OCI-LY7 (cell line): ENCODE measurements at regions of chr6 and their contacts with region 1.

Region 1: DNA sequence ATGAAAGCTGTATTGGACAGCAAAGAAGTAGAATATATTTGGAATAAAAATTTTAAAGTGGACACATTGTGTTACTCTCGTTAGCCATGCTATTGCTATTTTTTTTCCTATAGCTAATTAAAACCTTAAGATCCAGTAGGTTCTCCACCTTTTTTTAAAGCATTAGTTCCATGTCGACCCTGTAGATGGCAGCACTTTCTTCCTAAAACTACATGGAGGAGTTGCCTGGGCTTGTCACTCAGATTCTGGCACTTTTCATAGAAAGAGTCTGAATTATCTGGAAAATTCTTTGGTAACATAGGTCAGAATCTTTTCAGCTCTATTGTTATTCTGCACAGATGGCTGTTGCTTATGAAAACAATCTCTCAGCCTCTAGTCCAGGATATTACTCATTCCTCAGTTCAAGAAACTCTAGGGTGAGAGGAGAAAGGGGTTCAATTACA is 42.0 kb upstream of the ESR1 start:
- DNase-seq: peak; percentile 52
- H3K4me3 ChIP-seq: no peak overlapping the region
- H3K27ac ChIP-seq: no peak overlapping the region
- H3K4me1 ChIP-seq: no peaks in the 10 kb centered on the region
- CTCF ChIP-seq: peak; percentile 91

Region 2: DNA sequence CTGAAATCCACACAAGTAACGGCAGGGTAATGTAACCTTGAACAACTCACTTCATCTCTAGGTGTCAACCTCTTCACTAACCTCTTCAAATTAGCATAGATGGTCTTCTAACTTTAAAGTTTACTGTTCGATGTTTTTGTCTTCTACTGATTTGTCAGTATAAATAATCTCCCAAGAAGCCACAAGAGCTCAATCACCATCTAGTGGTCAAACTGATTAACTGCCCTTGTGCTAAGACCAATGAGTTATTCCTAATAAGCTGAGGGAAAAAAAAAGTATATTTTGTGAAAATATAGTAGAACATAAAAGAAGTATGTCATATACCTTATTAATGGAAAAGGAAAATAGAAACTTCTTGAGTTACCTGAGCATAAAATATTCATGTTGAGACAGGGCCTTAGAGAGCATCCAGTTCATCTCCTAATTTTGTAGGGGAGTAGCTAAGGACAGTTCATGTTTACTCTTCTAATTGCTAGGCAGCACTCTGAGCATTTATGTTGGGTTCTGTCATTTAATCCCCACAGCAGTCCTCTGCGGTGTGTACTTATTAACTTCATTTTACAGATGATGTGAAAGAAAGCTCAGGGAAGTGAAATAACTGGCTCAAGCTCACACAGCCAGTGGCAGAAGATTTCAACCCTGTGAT is 359.1 kb after region 1 on chr6:
- CTCF ChIA-PET with region 1: no interaction called
- POLR2A ChIA-PET with region 1: no interaction called
- intact Hi-C with region 1: loop called (anchors 5 kb)
- DNase-seq: peak; percentile 44
- H3K4me3 ChIP-seq: no peak overlapping the region
- H3K27ac ChIP-seq: no peak overlapping the region
- H3K4me1 ChIP-seq: no peaks in the 10 kb centered on the region
- CTCF ChIP-seq: peak; percentile 86

Region 3: DNA sequence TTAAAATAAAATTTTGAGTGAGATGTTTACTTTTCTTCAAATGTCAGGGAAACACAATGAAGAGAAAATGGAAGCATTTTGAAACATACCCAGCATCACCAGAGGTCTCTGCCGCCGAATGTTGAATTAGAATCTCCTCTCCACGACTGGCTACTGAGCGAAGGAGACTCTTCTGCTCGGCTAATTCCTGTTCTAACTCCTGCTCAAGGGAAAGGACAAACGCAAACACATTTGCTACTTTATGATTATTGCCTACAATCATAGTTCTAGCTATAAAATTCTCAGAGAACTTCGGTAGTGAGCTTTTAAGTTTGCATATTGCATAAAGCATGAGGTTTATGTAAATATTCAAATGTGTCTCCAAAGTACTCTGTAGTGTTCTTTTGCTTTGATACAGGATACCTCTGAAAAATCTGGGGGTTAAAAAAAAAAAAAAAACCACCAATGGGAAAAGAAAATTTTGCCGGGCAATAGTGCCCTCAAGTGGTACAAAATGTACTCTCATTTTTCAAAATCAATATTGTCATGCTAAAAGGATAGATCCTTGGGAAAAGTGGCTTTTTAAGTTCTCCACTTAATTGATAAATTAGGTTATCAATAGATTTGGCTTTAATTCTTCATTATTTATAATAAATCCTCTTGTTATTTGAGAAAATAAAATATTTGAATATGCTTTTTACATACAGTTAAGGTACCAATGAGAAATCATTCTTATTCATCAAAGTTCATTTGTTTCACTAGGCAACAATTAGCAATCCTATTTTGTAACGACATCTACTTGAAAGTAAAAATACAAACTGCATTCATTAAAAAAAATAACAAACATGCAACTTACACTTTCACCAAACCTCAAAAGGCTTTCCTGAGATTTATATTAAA is 502.7 kb after region 1 on chr6:
- CTCF ChIA-PET with region 1: no interaction called
- POLR2A ChIA-PET with region 1: no interaction called
- intact Hi-C with region 1: loop called (anchors 5 kb)
- DNase-seq: peak; percentile 46
- H3K4me3 ChIP-seq: no peak overlapping the region
- H3K27ac ChIP-seq: no peak overlapping the region
- H3K4me1 ChIP-seq: no peaks in the 10 kb centered on the region
- CTCF ChIP-seq: peak; percentile 89

Region 4: GRCh38 chr6:152356451-152357061 is 591.1 kb after region 1 on chr6:
- CTCF ChIA-PET with region 1: no interaction called
- POLR2A ChIA-PET with region 1: no interaction called
- intact Hi-C with region 1: loop called (anchors 5 kb)
- DNase-seq: peak; percentile 48
- H3K4me3 ChIP-seq: no peak overlapping the region
- H3K27ac ChIP-seq: no peak overlapping the region
- H3K4me1 ChIP-seq: no peaks in the 10 kb centered on the region
- CTCF ChIP-seq: peak; percentile 73